ENCODE measurements at regions of chr17 and their contacts with region 1.

Region 1: DNA sequence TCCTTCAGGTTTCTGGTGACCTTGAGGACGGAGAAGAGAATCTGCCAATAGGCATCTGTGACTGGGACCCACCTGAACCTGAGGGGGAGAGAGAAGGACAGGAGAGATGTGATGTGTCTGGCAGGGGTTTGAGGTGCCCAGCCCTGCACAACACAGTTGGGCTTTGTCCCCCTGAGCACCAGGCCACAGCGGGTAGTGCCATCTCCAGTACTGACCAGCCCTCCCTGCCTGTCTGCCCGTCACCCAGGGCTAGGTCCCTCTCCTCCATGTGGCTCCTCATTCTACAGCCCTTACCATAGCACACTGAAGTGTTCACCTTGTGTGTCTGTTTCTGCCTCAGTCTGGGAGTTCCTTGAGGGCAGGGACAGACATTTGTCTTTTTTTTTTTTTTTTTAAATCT is 30.8 kb downstream of the NLRP1 start:
- DNase-seq: no peak
- H3K4me3 ChIP-seq: no peak overlapping the region
- H3K27ac ChIP-seq: no peak overlapping the region
- H3K4me1 ChIP-seq: no peaks in the 10 kb centered on the region
- H3K27me3 ChIP-seq: no peaks in the 10 kb centered on the region
- CTCF ChIP-seq: no peak
- POLR2A ChIP-seq: no peak

Region 2: DNA sequence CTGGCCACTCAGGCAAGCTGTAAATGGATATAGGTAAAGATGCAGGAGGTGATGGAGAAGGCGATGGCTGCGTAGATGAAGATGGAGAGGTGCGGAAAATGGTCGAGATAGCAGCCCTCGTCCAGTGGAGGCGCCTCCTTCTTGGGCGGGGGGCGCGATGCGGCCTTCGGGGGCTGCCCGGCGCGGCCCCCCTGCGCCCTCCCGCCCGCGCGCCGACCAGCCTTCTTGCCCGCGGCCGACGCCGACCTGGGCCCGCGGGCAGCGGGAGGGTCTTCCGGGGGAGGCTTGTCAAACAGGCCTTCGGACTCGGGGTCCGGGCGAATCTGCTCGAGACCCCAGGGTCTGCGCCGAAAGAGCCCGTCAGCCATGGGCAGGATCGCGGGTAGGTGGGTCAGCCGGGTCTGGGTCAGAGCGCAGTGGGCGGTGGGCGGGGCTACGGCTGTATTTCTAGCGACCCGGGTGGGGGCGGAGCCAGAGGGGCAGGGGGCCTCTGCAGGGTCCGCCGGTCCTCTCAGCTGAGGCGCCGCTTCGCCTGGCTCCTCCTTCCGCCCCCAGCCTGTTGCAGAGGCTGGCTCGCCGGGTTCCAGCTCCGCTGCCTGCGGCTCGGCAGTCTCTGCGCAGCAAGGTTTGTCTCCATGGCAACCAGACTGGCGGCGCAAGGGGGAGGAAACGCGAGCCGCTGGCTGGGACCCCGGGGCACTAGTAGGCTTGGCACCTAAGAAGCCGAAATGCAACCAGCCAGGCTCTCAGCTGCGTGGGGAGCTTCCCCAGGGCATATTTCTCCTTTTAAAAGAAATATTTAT is 52.7 kb before region 1 on chr17:
- intact Hi-C with region 1: loop called (anchors 5 kb)
- DNase-seq: peak; percentile 94
- H3K4me3 ChIP-seq: peak overlapping the region; percentile 42 to 78 (median 54)
- H3K27ac ChIP-seq: peak overlapping the region in 7 of 8 donors; percentile 58 to 71 (median 63)
- H3K4me1 ChIP-seq: peaks cover 12 to 26% (median 20%) of the 10 kb centered on the region in 6 donors
- H3K27me3 ChIP-seq: peaks cover 0 to 18% (median 0%) of the 10 kb centered on the region in 7 donors
- CTCF ChIP-seq: no peak
- POLR2A ChIP-seq: no peak

Measured in spleen (tissue), 13 donors.